ENCODE measurements at regions of chr7 and their contacts with region 1.

Region 1: DNA sequence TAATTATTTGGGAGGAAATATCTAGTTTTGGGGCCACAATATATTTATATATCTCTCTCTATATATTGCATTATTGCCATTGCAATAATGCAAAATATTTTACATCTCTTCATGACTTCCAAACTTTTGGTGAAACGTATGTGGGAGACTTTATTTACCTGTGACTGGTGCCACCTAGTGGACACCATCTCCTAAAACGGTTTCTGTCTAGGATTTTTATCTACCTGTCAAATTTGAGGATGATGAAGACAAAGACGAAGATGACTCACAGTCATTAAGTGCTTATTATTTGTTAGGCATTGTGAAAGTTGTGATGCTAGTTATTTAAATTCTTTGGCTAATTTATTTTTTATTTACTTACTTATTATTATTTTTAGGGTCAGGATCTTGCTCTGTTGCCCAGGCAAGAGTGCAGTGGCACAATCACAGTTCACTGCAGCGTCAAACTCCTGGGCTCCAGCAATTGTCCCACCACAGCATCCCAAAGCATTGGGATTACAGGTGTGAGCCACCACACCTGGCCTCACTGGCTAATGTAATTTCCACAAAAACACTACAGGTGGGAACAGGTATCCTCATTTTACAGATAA is 18.7 kb upstream of the CBLL1 start:
- DNase-seq: no peak
- ATAC-seq: no peak
- H3K4me3 Mint-ChIP-seq: no peak overlapping the region
- H3K27ac Mint-ChIP-seq: no peak overlapping the region
- H3K4me1 Mint-ChIP-seq: no peaks in the 10 kb centered on the region
- H3K27me3 Mint-ChIP-seq: peaks cover 16% of the 10 kb centered on the region
- CTCF ChIP-seq: peak; percentile 48

Region 2: DNA sequence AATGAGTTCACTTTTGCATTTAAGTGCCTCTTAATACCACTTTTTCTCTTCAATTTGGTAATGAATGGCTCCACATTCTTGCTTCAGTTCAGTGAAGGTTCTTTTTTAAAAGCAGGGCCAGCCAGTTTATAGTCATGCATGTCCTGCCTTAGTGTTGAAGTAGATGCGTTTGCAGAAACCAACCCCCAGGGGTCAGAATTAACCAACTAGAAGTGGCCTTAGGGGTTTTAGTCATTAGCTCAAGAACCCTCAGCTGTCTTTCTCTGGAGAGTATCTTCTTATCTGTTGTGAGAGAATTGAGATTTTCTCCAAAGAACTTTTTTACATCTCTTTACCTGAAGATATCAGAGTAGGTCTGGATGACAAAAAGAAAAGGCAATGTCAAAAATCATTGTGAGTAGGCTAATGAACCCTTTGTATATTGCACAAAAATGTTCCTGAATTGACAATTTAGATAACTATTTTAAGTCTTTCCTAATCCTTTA is 778.0 kb before region 1 on chr7:
- CTCF ChIA-PET with region 1: no interaction called
- POLR2A ChIA-PET with region 1: no interaction called
- intact Hi-C with region 1: loop called (anchors 10 kb)
- DNase-seq: no peak
- ATAC-seq: peak; percentile 62
- H3K4me3 Mint-ChIP-seq: no peak overlapping the region
- H3K27ac Mint-ChIP-seq: no peak overlapping the region
- H3K4me1 Mint-ChIP-seq: no peaks in the 10 kb centered on the region
- H3K27me3 Mint-ChIP-seq: no peaks in the 10 kb centered on the region
- CTCF ChIP-seq: no peak

Region 3: GRCh38 chr7:107201795-107202450 is 523.3 kb before region 1 on chr7:
- CTCF ChIA-PET with region 1: no interaction called
- POLR2A ChIA-PET with region 1: no interaction called
- intact Hi-C with region 1: loop called (anchors 10 kb)
- DNase-seq: no peak
- ATAC-seq: no peak
- H3K4me3 Mint-ChIP-seq: no peak overlapping the region
- H3K27ac Mint-ChIP-seq: peak overlapping the region; percentile 1
- H3K4me1 Mint-ChIP-seq: no peaks in the 10 kb centered on the region
- H3K27me3 Mint-ChIP-seq: no peaks in the 10 kb centered on the region
- CTCF ChIP-seq: no peak

Region 4: DNA sequence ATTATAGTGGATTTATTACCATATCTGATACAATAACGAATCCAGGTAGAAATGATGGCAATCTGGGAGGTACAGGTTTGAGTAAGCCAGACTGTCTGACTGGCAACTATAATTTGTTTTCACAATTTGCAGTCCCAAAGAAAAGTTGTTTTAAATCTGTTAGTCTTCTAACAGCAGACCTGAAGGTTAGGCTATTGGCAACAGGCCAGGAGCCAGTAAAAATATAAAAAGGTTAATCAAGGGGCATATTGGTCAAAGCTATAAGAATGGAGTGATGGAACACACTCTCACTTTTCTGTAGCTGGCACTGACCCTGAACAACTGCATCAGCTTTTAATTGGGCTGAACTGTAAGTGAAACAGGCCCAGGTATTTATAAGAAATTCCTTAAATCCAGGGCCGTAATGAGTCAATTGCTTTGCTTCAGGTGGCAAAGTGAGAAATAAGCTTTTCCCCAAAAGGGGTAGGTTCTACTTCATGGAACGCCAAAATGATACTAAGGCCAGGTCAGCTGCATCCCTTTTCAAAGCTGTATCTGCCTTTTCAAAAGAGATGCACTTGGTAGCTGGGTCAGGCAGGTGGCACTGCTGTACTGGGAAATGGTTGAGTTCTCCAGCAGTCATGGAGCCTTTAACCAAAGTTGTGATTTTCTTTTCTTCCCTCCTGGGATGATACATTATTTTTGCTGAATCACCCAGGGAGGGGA is 262.4 kb before region 1 on chr7:
- CTCF ChIA-PET with region 1: interaction called, 93 read pairs
- POLR2A ChIA-PET with region 1: interaction called, 3 read pairs
- intact Hi-C with region 1: loop called (anchors 1 kb)
- DNase-seq: no peak
- ATAC-seq: peak; percentile 75
- H3K4me3 Mint-ChIP-seq: no peak overlapping the region
- H3K27ac Mint-ChIP-seq: no peak overlapping the region
- H3K4me1 Mint-ChIP-seq: no peaks in the 10 kb centered on the region
- H3K27me3 Mint-ChIP-seq: no peaks in the 10 kb centered on the region
- CTCF ChIP-seq: no peak

Region 5: DNA sequence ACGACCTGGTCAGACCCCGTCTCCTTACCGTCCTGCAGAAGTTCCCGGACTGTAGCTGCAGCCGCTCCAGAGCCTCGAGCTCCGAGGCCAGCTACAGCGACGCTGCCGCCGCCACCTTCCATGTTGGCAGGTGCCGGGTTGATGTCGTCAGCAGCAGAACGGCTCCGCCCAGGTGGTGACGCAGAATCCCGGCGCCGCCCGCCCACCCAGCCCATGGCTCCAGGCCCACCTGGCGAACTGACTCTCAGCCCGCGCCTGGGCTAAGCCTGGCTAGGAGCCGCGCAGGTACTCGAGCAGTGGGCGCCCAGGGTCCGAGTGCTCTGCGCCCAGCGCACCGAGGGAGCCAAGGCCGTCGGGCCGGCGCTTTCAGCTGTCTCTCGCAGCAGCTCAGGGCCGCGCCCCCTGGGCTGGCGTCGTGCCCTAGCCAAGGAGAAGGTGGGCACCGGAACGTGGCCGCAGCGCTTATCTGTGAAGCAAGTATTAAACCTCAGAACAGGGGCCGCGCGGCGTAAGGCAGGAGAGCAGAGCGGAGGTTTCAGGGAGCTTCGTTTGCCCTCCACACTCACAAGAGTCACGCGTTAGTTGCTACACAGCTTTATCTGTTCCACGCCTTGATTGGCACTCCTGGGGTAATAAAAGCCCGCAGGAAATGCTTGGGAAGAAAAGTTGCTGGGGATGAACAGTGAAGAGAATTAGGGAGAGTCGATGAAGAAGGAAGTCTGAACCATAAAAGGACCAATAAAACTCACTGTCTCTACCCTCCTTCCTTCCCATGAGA is 161.3 kb before region 1 on chr7 and contains the starts of genes COG5 and DUS4L:
- CTCF ChIA-PET with region 1: no interaction called
- POLR2A ChIA-PET with region 1: no interaction called
- intact Hi-C with region 1: loop called (anchors 1 kb)
- DNase-seq: peak; percentile 83
- ATAC-seq: peak; percentile 93
- H3K4me3 Mint-ChIP-seq: peak within 1 kb of the TSS; percentile 93
- H3K27ac Mint-ChIP-seq: peak within 1 kb of the TSS; percentile 82
- H3K4me1 Mint-ChIP-seq: peaks cover 43% of the 10 kb centered on the region
- H3K27me3 Mint-ChIP-seq: no peaks in the 10 kb centered on the region
- CTCF ChIP-seq: no peak
- total RNA-seq, gene COG5: 40.6 and 47.0 TPM in 2 replicates
- total RNA-seq, gene DUS4L: 11.0 and 14.6 TPM in 2 replicates

Region 6: DNA sequence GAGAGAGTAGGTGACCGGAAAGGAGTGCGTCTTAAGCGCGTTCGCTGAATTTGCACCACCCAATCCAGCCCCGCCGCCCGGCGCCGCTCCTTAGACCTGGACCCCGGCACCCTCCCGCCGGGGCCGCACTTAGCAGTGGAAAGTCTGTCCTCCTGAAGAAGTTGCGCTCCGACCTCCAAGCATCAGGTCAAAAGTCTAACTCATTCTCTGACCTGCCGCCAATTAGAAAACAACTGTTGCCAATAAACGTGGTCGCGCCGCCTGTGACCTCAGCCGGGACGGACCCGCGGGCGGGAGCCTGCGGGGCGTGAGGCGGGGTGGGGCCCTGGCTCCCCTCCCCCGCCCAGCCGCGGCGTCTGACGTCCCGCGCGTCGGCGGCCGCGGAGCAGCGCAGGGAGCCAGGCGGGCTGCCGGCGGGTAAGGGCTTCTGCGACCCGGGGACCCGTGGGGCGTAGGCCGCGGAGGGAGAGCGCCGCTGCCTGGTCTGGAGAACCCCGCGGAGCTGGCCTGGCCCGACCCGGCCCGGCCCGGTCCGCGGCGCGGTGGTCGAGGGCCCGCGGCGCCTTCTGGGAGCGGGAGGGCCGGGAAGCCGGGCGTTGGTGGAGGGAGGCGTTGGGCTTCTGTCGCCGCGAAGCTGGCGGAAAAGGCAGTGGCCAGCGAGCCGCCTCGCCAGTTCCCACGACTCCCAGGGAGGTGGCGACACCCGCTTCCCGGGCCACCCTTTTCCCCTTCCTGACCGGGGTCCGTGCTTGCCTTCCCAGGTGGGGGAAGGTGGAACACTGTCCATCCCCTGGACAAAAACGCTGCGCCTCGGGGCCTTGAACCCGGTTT is 145.1 kb before region 1 on chr7 and contains the start of gene BCAP29:
- CTCF ChIA-PET with region 1: interaction called, 4 read pairs
- POLR2A ChIA-PET with region 1: no interaction called
- intact Hi-C with region 1: loop called (anchors 1 kb)
- DNase-seq: peak; percentile 81
- ATAC-seq: peak; percentile 98
- H3K4me3 Mint-ChIP-seq: peak within 1 kb of the TSS; percentile 95
- H3K27ac Mint-ChIP-seq: peak within 1 kb of the TSS; percentile 90
- H3K4me1 Mint-ChIP-seq: peaks cover 23% of the 10 kb centered on the region
- H3K27me3 Mint-ChIP-seq: no peaks in the 10 kb centered on the region
- CTCF ChIP-seq: no peak
- total RNA-seq, gene BCAP29: 23.9 and 24.9 TPM in 2 replicates